Panc1 (cell line): ENCODE measurements at regions of chr12 and their contacts with region 1.

Region 1: DNA sequence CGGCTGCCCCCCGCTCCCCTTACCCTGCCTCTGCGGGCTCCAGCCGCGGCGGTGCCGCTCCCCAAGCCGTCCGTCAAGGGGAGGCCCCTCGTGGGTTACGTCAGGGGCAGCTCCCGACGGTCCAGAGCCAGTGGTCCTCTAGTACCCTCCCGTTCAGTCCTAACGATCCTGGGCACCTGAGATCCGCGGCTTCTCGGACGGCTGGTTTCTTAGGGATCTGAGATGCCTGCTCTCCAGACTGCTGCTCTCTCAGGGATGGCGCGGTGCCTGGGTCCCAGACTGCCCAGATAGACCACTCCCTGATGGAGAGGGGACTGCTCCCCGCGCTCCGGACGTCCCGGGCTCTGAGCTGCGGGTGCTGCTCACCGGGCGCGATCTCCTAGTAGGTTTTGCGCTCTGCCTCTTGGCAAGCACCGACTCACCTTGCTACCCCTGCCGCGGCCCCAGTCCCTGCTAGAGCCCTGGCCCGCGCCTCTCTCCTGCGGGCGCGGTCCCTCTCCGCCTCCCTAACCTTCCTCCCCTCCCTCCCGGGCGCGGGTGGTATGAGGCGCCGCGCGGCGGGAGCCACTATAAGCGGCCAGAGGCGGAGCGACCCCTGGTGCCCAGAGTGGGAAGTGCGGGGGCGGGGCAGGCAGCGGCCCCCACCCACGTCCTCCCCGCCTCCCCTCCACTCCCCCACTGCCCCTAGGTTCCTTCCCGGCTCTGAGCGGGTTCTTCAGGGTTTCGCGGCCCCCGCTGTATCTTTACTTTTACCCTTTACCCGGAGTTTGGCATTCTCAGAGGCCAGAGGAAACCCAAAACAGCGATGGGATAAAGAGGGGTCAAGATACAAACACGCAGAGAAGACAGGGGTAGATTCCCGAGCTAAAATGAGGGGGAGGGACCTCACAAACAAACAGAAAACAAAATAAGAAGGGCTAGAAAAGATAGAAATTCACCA is at the start of gene C1QL4:
- DNase-seq: no peak
- ATAC-seq: peak; percentile 83
- H3K4me3 ChIP-seq: peak within 1 kb of the TSS; percentile 56 to 65
- H3K27ac ChIP-seq: no peak within 1 kb of the TSS
- H3K4me1 ChIP-seq: peaks cover 8% of the 10 kb centered on the region; the same call in 1 of the 2 replicates
- H3K27me3 ChIP-seq: no peaks in the 10 kb centered on the region
- CTCF ChIP-seq: peak; percentile 99
- total RNA-seq, gene C1QL4: 2.1 TPM

Region 2: DNA sequence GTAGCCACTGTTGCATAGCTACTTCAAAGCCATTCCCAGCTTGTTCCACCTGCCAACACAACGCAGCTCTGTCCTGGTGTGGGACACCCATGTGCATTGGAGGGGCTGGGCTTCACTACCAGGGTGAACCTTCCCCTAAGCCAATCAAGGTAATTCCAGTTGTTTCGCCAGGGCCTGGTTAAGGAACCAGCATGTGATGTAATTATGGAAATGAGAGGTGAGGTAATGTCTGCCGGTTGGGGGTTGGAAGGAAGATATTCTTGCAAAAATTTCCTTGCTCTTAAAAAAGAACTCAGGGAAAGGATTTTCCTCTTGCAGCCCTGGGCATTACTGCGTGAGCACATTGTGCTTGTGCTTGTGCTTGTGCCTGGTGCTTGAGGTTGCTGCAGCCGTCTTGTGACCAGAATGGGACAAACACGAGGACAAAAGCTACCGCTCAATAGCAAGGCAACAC is 57.2 kb before region 1 on chr12:
- CTCF ChIA-PET with region 1: interaction called, 12 read pairs
- POLR2A ChIA-PET with region 1: no interaction called
- in situ Hi-C with region 1: no loop called
- intact Hi-C with region 1: no loop called
- DNase-seq: no peak
- ATAC-seq: no peak
- H3K4me3 ChIP-seq: no peak overlapping the region
- H3K27ac ChIP-seq: no peak overlapping the region
- H3K4me1 ChIP-seq: peaks cover 3% of the 10 kb centered on the region
- H3K27me3 ChIP-seq: no peaks in the 10 kb centered on the region
- CTCF ChIP-seq: no peak

Region 3: DNA sequence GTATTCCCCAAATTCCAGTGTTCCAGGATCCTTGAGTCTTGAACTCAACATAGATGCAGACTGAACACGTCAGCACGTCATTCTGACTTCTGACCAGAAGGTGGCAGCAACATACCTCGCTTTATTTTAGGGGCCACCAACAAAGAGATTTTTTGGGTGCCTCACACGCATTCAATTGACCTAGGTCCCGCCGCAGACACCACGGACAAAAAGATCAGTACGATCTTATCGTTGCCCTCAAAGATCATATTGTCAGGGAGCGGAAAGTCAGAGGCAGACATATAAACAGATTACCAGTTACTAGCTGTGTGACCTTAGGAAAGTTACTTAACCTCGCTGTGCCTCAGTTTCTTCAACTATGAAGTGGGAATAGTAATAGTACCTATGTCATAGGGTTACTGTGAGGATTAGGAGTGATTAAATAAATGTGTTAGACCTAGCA is 48.5 kb before region 1 on chr12:
- CTCF ChIA-PET with region 1: interaction called, 14 read pairs
- POLR2A ChIA-PET with region 1: no interaction called
- in situ Hi-C with region 1: no loop called
- intact Hi-C with region 1: loop called (anchors 5 kb)
- DNase-seq: no peak
- ATAC-seq: peak; percentile 70; the same call in 1 of the 2 replicates
- H3K4me3 ChIP-seq: no peak overlapping the region
- H3K27ac ChIP-seq: no peak overlapping the region
- H3K4me1 ChIP-seq: no peaks in the 10 kb centered on the region
- H3K27me3 ChIP-seq: no peaks in the 10 kb centered on the region
- CTCF ChIP-seq: peak; percentile 91

Region 4: DNA sequence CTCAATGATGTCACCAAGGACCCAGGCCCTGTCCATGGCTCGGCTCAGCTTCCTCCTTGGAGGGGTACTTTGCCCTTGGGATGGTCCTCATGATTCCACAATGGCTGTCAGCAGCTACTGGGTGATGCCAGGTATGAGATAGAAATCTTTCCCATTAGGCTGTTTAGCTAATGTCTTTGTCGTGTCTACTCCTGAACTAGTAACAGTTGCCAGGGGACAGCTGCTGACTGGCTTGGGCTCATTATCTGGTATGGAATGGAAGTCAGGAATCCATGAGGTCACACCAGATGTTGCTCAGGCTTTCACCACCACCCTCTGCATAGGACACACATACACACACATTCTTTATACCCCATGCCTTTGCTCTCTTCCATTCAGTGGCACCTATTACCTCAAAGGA is 32.8 kb before region 1 on chr12:
- CTCF ChIA-PET with region 1: no interaction called
- POLR2A ChIA-PET with region 1: no interaction called
- in situ Hi-C with region 1: no loop called
- intact Hi-C with region 1: no loop called
- DNase-seq: no peak
- ATAC-seq: no peak
- H3K4me3 ChIP-seq: no peak overlapping the region
- H3K27ac ChIP-seq: no peak overlapping the region
- H3K4me1 ChIP-seq: no peaks in the 10 kb centered on the region
- H3K27me3 ChIP-seq: no peaks in the 10 kb centered on the region
- CTCF ChIP-seq: no peak

Region 5: GRCh38 chr12:49388682-49389386 is 51.9 kb after region 1 on chr12:
- CTCF ChIA-PET with region 1: no interaction called
- POLR2A ChIA-PET with region 1: no interaction called
- in situ Hi-C with region 1: no loop called
- intact Hi-C with region 1: no loop called
- DNase-seq: no peak
- ATAC-seq: no peak
- H3K4me3 ChIP-seq: no peak overlapping the region
- H3K27ac ChIP-seq: no peak overlapping the region
- H3K4me1 ChIP-seq: no peaks in the 10 kb centered on the region
- H3K27me3 ChIP-seq: no peaks in the 10 kb centered on the region
- CTCF ChIP-seq: no peak